Naive thymus-derived CD8-positive, alpha-beta T cell (primary cell): ENCODE measurements at regions of chr12 and their contacts with region 1.

Region 1: DNA sequence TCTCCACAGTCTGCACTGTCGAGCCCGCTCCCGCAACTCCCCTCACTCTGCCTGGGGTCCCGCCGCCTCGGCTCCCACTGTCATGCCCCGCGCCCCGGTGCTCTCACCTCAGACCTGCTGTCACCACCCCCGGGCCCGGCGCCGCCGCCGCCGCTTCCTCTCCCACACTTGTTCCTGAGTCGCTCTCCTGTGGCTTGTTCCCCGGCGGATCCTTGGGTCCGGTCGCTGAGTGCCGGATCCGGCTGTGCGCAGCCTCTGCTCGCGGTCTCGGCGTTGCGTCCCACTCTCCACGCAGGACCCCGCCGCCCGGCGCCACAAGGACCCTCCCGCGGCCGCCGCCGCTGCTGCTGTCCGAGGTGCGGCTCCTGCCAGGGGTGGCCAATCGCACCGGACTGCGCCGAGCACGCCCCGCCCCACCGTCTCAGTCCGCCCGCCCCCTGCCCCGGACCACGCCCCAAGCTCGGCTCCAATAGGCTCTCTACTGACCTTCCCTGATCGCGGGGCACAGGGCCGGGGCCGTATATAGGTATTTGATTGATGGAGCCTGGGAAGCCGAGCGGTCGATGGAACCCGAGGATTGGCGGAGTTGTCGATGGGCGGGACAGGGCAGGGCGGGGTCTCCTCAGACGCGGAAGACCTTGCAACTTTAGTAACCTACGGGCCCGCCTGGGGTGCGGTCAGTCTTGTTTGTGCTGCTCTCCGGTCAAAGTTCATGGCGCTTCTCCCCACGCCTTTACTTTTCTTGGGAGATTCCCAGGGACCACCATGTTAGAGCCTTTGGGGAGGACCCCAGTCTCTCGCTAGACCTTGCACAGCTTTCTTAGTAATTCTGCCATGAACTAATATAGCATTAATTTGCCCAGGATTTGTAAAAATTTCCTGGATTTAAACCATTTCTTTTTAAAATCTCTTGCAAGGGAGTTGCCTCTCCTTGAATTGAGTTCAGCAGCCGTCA is at the start of gene TAOK3:
- DNase-seq: peak; percentile 93 to 99 (median 97)
- ATAC-seq: peak; percentile 84 to 85
- H3K4me3 Mint-ChIP-seq: peak within 1 kb of the TSS; percentile 91 to 99 (median 95)
- H3K27ac Mint-ChIP-seq: peak within 1 kb of the TSS; percentile 59 to 97 (median 96)
- H3K4me1 Mint-ChIP-seq: peaks cover 24 to 57% (median 52%) of the 10 kb centered on the region in 4 donors
- H3K27me3 Mint-ChIP-seq: no peaks in the 10 kb centered on the region
- polyA plus RNA-seq, gene TAOK3: 71.6 to 86.4 (median 74.7) TPM

Region 2: DNA sequence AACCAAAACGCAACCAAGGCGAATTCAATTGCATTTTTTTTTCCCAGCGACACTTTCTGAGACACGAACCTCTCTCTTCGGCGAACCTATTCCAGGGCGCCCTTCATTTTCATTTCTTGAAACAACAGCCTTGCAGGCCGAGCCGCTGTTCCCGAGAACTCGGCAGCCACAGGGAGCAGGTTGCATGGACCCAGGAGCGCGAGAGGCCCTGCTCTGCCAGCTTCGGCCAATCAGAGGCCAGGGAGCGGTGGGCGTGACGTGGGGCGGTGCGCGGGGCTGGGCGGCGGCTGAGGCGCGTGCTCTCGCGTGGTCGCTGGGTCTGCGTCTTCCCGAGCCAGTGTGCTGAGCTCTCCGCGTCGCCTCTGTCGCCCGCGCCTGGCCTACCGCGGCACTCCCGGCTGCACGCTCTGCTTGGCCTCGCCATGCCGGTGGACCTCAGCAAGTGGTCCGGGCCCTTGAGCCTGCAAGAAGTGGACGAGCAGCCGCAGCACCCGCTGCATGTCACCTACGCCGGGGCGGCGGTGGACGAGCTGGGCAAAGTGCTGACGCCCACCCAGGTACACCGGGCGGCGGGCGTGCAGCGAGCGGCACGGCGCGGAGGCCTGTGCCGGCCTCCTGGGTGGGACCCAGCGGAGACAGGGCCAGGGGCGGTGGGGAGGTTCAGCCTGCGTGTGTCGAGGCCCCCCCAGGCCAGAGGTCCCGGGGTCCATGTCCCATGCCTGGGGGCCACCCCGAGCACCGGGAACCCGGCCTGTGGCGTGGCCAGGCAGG is 236.8 kb before region 1 on chr12 and contains the start of gene PEBP1:
- POLR2A ChIA-PET with region 1: interaction called, 13 read pairs
- DNase-seq: peak; percentile 85 to 93 (median 91)
- ATAC-seq: peak; percentile 99
- H3K4me3 Mint-ChIP-seq: peak within 1 kb of the TSS; percentile 91 to 99 (median 98)
- H3K27ac Mint-ChIP-seq: peak within 1 kb of the TSS; percentile 80 to 98 (median 93)
- H3K4me1 Mint-ChIP-seq: peaks cover 9 to 44% (median 30%) of the 10 kb centered on the region in 4 donors
- H3K27me3 Mint-ChIP-seq: no peaks in the 10 kb centered on the region
- polyA plus RNA-seq, gene PEBP1: 290 to 344 (median 340) TPM

Region 3: DNA sequence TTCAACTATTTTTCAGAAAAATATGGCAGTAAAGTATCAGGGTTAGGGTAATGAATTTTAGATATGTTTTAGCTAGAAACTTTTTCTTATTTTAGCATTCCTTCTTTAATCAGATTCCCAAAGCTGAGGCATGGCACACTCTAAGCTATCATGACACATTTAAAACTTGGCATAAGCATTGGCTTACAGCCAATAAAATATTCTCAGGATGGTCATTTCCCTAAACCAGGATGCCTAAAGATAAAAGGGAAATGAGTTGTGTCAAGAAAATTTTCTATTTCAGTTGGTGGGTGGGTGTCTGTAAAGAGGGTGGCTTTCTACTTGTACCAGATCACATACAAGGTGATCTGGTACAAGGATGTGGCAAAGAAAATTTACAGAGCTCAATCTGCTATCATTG is 189.1 kb before region 1 on chr12:
- POLR2A ChIA-PET with region 1: interaction called, 12 read pairs
- DNase-seq: no peak
- ATAC-seq: no peak
- H3K4me3 Mint-ChIP-seq: no peak overlapping the region
- H3K27ac Mint-ChIP-seq: peak overlapping the region in 2 of 10 donors; percentile 8 to 17
- H3K4me1 Mint-ChIP-seq: peaks cover 2 to 12% (median 9%) of the 10 kb centered on the region in 4 donors
- H3K27me3 Mint-ChIP-seq: no peaks in the 10 kb centered on the region

Region 4: DNA sequence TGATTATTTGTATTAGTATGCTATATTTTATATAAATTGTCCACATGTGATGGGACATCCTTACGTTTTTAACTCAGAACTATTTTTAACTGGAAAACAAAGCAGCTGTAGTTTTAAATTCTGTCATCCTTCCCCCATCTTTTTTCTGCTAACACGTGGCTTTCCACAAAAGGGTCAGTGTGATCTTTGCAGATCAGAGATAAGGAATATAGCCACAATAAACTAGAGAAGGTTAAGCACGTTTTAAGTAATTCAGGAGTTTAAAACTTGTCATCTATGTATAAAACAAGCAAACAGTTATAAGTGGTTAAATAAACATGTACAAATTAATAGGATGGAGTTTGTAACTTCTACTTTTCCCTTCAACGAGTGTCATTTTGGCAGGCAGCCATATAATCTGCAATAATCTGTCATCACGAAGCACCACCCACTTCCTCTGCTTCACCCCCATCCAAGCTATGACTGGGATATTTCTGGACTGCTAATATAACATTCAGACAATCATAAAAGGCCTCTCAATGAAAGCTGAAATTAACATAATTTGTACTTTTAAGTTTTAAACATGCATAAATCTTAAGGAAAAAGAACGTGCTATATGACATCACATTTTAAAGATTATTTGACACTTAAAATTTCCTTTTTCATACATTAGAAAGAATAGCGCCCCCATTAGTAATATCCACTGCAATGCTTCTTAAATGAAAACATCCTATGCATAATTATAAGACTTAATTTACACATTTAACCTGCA is 15.4 kb before region 1 on chr12:
- POLR2A ChIA-PET with region 1: interaction called, 46 read pairs
- DNase-seq: peak in 9 of 10 donors; percentile 22 to 75 (median 53)
- ATAC-seq: peak; percentile 67 to 72
- H3K4me3 Mint-ChIP-seq: peak overlapping the region; percentile 71 to 98 (median 85)
- H3K27ac Mint-ChIP-seq: peak overlapping the region; percentile 54 to 95 (median 80)
- H3K4me1 Mint-ChIP-seq: peaks cover 23 to 72% (median 51%) of the 10 kb centered on the region in 4 donors
- H3K27me3 Mint-ChIP-seq: no peaks in the 10 kb centered on the region

Region 5: GRCh38 chr12:118436002-118436730 is 63.3 kb after region 1 on chr12:
- POLR2A ChIA-PET with region 1: no interaction called
- DNase-seq: no peak
- ATAC-seq: no peak
- H3K4me3 Mint-ChIP-seq: no peak overlapping the region
- H3K27ac Mint-ChIP-seq: no peak overlapping the region
- H3K4me1 Mint-ChIP-seq: no peaks in the 10 kb centered on the region
- H3K27me3 Mint-ChIP-seq: peaks cover 4 to 17% (median 11%) of the 10 kb centered on the region in 5 donors

Region 6: DNA sequence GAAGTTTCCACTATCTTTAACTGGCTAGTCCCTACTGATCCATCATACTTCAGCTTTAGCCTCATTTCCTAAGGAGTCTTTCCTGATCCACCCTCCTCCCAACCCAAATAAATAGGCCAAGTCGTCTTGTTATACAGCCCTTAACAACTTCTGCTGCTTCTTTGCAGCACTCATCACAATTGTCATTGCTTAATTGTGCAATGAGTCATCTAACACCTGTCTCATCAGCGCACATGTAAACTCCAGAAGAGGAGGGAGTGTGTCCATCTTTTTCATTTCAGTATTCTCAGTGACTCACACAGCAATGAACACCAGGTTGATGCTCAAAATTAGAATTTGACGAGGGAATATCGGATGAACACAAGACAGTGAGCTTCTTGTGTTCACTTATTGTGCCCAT is 90.9 kb after region 1 on chr12:
- POLR2A ChIA-PET with region 1: no interaction called
- DNase-seq: no peak
- ATAC-seq: no peak
- H3K4me3 Mint-ChIP-seq: no peak overlapping the region
- H3K27ac Mint-ChIP-seq: no peak overlapping the region
- H3K4me1 Mint-ChIP-seq: no peaks in the 10 kb centered on the region
- H3K27me3 Mint-ChIP-seq: peaks cover 6 to 13% (median 8%) of the 10 kb centered on the region in 5 donors